ENCODE measurements at regions of chr21 and their contacts with region 1.

Region 1: DNA sequence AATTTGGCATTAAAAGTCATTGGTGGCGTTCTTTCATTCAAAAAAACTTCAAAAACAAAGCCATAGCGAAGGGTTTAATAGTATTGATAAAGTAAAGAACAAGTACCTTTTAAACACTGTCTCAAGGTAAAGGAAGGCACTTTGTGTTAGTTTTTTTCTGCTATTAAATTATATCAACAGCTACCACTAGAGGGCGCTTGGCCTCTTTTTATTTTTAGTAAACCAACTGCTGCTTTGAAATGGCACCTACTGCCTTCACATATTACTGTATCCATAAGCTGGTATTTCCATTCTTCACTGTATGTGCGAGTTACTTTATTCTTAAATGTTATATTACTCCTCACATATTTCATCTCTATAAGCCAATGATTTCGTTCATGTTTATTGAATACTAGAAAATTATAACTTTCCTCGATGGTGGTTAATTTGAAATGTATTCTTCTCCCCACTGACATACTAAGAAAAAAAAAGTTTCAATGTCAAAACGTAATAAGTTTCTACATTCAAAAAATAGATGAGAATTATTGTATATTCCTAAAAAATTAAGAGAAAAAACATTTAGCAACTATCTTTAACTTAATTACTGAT is 125.7 kb upstream of the CXADR start:
- DNase-seq: peak in 1 of 2 donors; percentile 47
- ATAC-seq: peak in 5 of 8 donors; percentile 33 to 54 (median 37)
- H3K4me3 ChIP-seq: no peak overlapping the region
- H3K27ac ChIP-seq: no peak overlapping the region
- H3K4me1 ChIP-seq: no peaks in the 10 kb centered on the region
- H3K27me3 ChIP-seq: no peaks in the 10 kb centered on the region
- CTCF ChIP-seq: peak; percentile 67 to 84 (median 78)

Region 2: GRCh38 chr21:17446737-17447136 is 59.6 kb after region 1 on chr21:
- intact Hi-C with region 1: loop called in 2 of 10 experiments (anchors 5 to 10 kb)
- DNase-seq: no peak
- ATAC-seq: no peak
- H3K4me3 ChIP-seq: no peak overlapping the region
- H3K27ac ChIP-seq: no peak overlapping the region
- H3K4me1 ChIP-seq: peaks cover 0 to 6% (median 0%) of the 10 kb centered on the region in 9 donors
- H3K27me3 ChIP-seq: no peaks in the 10 kb centered on the region
- CTCF ChIP-seq: no peak

Region 3: GRCh38 chr21:17512253-17513213 is 125.4 kb after region 1 on chr21 and contains the start of gene CXADR:
- intact Hi-C with region 1: loop called in 1 of 10 experiments (anchors 10 kb)
- DNase-seq: peak; percentile 63 to 76
- ATAC-seq: peak; percentile 86 to 98 (median 90)
- H3K4me3 ChIP-seq: peak within 1 kb of the TSS; percentile 46 to 80 (median 66)
- H3K27ac ChIP-seq: peak within 1 kb of the TSS; percentile 50 to 94 (median 86)
- H3K4me1 ChIP-seq: peaks cover 0 to 24% (median 11%) of the 10 kb centered on the region in 9 donors
- H3K27me3 ChIP-seq: peaks cover 0 to 58% (median 12%) of the 10 kb centered on the region in 7 donors
- CTCF ChIP-seq: peak; percentile 35 to 60 (median 53)
- total RNA-seq, gene CXADR: 16.7 to 42.1 (median 28.5) TPM

Region 4: DNA sequence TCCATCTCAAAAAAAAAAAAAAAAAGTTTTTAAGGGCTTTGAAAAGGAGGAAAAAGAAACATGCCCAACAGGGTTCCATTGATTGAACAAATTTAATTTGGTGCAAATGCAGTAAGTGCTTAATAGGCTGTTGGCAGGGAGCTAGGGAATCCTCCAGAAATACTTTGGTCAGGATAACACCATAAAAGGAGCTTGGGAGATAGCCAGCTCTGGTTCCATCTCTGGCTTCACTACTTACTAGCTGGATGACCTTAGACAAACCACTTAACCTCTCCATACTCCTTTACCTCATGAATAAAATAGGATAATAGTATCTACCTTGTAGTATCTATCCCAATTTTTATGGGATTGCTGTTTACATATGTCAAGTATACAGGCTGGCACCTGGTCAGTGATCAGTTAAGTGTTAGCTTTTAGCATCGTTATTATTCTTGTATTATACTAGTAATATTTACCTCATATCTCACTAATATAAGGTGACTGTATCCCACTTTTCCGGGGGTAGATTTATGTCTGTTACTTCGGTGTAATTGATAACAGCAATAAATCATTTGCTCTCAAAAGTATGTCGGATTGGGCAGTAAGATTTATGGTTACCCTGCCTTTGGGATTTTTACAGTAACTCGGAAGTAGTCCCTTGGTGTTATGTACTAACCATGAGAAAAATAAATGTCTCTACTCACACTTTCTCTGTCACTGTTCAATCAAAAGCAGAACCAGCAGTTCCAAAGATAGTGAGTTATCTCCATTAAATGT is 189.1 kb after region 1 on chr21:
- intact Hi-C with region 1: loop called in 2 of 10 experiments (anchors 2 to 5 kb)
- DNase-seq: no peak
- ATAC-seq: no peak
- H3K4me3 ChIP-seq: no peak overlapping the region
- H3K27ac ChIP-seq: no peak overlapping the region
- H3K4me1 ChIP-seq: peaks cover 0 to 8% (median 0%) of the 10 kb centered on the region in 9 donors
- H3K27me3 ChIP-seq: no peaks in the 10 kb centered on the region
- CTCF ChIP-seq: no peak

Region 5: DNA sequence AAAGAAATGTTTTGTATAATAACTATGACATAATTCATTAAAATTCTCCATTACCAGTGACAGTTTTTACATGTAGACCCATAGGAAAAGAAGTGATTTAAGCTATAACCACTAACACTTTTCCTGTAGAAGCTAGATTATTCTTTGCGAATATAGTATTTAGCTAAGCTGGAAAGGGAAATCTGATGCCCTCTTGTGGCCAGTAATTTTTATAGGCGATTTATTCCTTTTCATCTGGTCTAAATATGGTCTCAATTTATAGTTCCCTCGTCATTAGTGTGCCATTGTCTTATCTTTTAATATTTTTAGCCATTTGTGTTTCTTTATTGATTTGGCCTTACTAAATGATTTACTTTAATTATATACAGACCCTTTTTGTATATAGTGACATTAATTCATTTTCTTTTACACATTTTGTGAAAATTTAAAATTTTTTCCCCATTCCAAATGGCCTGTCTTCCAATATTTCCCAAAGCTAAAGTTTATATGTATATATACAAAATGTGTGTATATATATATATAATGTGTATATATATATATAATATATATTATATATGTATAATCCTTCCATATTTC is 198.8 kb after region 1 on chr21:
- intact Hi-C with region 1: loop called (anchors 1 to 5 kb)
- DNase-seq: peak in 1 of 2 donors; percentile 11
- ATAC-seq: no peak
- H3K4me3 ChIP-seq: no peak overlapping the region
- H3K27ac ChIP-seq: no peak overlapping the region
- H3K4me1 ChIP-seq: peaks cover 0 to 3% (median 0%) of the 10 kb centered on the region in 9 donors
- H3K27me3 ChIP-seq: no peaks in the 10 kb centered on the region
- CTCF ChIP-seq: peak; percentile 11 to 77 (median 68)

Measured in heart right ventricle (tissue), 16 donors.